Common myeloid progenitor, CD34-positive (primary cell): ENCODE measurements at regions of chr7 and their contacts with region 1.

Region 1: GRCh38 chr7:2384354-2385243 is 18.8 kb upstream of the CHST12 start:
- DNase-seq: peak in 2 of 3 donors; percentile 41 to 48
- H3K4me3 ChIP-seq: no peak overlapping the region
- H3K27ac ChIP-seq: no peak overlapping the region
- H3K4me1 ChIP-seq: peaks cover 0 to 19% (median 9%) of the 10 kb centered on the region in 4 experiments
- H3K27me3 ChIP-seq: no peaks in the 10 kb centered on the region

Region 2: DNA sequence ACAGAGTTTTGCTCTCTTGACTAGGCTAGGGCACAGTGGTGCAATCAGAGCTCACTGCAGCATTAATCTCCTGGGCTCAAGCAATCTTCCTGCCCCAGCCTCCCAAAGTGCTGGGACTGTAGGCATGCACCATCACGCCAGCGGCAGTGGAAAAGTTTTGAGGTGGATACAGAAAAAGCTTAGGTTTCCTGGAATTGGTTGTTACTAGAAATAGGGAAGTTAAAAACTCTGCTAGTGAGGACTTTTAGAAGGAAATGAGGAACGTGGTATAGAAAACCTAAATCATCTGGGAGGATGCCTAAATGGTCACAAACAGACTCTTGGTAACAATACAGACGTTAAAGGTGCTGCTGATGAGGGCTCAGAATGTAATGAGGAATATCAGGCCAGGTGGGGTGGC is 59.4 kb before region 1 on chr7:
- CTCF ChIA-PET with region 1: no interaction called
- POLR2A ChIA-PET with region 1: no interaction called
- DNase-seq: peak in 2 of 3 donors; percentile 39 to 54
- H3K4me3 ChIP-seq: peak overlapping the region in 4 of 7 experiments; percentile 12 to 52 (median 27)
- H3K27ac ChIP-seq: peak overlapping the region in 1 of 2 experiments; percentile 43
- H3K4me1 ChIP-seq: peaks cover 0 to 33% (median 14%) of the 10 kb centered on the region in 4 experiments
- H3K27me3 ChIP-seq: no peaks in the 10 kb centered on the region

Region 3: GRCh38 chr7:2411815-2412586 is 27.4 kb after region 1 on chr7:
- CTCF ChIA-PET with region 1: interaction called, 14 read pairs
- POLR2A ChIA-PET with region 1: interaction called, 5 read pairs
- DNase-seq: no peak
- H3K4me3 ChIP-seq: peak overlapping the region in 2 of 7 experiments; percentile 33 to 52
- H3K27ac ChIP-seq: no peak overlapping the region
- H3K4me1 ChIP-seq: peaks cover 28 to 92% (median 75%) of the 10 kb centered on the region in 4 experiments
- H3K27me3 ChIP-seq: no peaks in the 10 kb centered on the region

Region 4: GRCh38 chr7:2417981-2418481 is 33.4 kb after region 1 on chr7:
- CTCF ChIA-PET with region 1: interaction called, 19 read pairs
- POLR2A ChIA-PET with region 1: interaction called, 8 read pairs
- DNase-seq: peak in 2 of 3 donors; percentile 82 to 86
- H3K4me3 ChIP-seq: no peak overlapping the region
- H3K27ac ChIP-seq: no peak overlapping the region
- H3K4me1 ChIP-seq: peaks cover 10 to 55% (median 31%) of the 10 kb centered on the region in 4 experiments
- H3K27me3 ChIP-seq: no peaks in the 10 kb centered on the region

Region 5: GRCh38 chr7:2451171-2452073 is 66.8 kb after region 1 on chr7:
- CTCF ChIA-PET with region 1: interaction called, 15 read pairs
- POLR2A ChIA-PET with region 1: no interaction called
- DNase-seq: peak; percentile 67 to 79 (median 77)
- H3K4me3 ChIP-seq: peak overlapping the region in 6 of 7 experiments; percentile 44 to 77 (median 60)
- H3K27ac ChIP-seq: peak overlapping the region in 1 of 2 experiments; percentile 14
- H3K4me1 ChIP-seq: peaks cover 0 to 15% (median 12%) of the 10 kb centered on the region in 4 experiments
- H3K27me3 ChIP-seq: no peaks in the 10 kb centered on the region